CD8-positive, alpha-beta T cell (primary cell): ENCODE measurements at regions of chr1 and their contacts with region 1.

Region 1: DNA sequence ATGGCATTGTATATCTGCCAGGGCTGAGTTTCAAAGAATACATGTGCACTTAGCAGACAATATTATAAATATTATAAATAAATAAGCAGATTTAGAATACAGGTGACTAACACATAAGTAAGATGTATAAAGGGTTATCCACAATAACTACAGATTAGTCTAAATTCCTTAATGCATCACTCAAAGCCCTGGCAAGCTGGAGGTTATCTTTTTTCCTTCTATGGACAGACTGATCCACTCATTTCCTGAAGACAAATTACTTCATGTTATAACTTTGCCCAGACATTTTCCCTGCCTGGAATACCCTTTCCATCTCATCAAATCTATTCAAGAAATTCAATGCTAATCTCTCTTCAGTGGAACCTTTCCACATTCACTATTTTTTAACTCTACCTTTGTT is 38.8 kb downstream of the LUZP1 start:
- DNase-seq: no peak
- ATAC-seq: no peak
- H3K4me3 ChIP-seq: no peak overlapping the region
- H3K4me3 Mint-ChIP-seq: no peak overlapping the region
- H3K27ac ChIP-seq: no peak overlapping the region
- H3K27ac Mint-ChIP-seq: no peak overlapping the region
- H3K4me1 ChIP-seq: no peaks in the 10 kb centered on the region
- H3K4me1 Mint-ChIP-seq: peaks cover 21% of the 10 kb centered on the region
- H3K27me3 ChIP-seq: no peaks in the 10 kb centered on the region
- H3K27me3 Mint-ChIP-seq: no peaks in the 10 kb centered on the region
- CTCF ChIP-seq: no peak

Region 2: DNA sequence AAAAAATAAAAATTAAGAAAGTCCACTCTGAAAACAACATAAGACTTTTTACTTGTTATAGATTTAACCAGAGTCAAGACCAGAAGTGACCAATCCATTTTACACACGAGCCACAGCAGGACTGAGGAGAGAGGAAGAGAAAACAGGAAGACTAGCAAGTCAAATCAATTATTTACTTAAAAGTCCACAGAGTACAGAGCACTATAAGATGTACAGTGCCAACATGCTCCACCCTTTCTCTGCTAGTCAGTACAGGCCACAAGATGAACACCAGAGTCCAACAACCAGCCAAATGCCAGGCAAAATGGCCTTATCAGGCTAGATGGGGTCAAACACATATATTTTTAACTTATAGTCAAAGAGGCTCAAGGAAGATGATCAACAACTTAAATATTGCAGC is 19.3 kb after region 1 on chr1:
- CTCF ChIA-PET with region 1: no interaction called
- POLR2A ChIA-PET with region 1: no interaction called
- intact Hi-C with region 1: loop called in 1 of 2 experiments (anchors 1 kb)
- DNase-seq: no peak
- ATAC-seq: no peak
- H3K4me3 ChIP-seq: no peak overlapping the region
- H3K4me3 Mint-ChIP-seq: no peak overlapping the region
- H3K27ac ChIP-seq: no peak overlapping the region
- H3K27ac Mint-ChIP-seq: no peak overlapping the region
- H3K4me1 ChIP-seq: peaks cover 14% of the 10 kb centered on the region
- H3K4me1 Mint-ChIP-seq: peaks cover 42% of the 10 kb centered on the region
- H3K27me3 ChIP-seq: no peaks in the 10 kb centered on the region
- H3K27me3 Mint-ChIP-seq: no peaks in the 10 kb centered on the region
- CTCF ChIP-seq: no peak

Region 3: DNA sequence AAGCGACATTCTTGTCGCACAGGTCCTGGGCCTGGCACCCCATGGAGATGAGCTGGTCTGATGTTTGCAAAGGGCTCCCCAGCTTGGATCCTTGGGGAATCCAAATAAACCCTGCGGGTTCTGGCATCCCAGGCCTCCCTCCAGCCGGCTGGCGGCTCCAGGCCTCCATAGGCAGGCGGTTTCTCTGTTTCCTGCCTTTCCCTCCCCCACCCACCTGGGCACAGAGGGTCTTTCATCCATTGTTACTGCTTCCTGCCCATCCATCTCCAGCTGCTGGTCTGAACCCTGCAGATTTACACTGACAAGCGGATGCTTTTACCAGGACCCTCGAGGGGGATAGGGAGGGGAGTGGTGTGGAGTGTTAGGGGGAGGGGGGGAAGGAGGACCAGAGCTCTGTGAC is 468.6 kb after region 1 on chr1:
- CTCF ChIA-PET with region 1: no interaction called
- POLR2A ChIA-PET with region 1: no interaction called
- intact Hi-C with region 1: no loop called
- DNase-seq: no peak
- ATAC-seq: no peak
- H3K4me3 ChIP-seq: peak overlapping the region in 1 of 2 experiments; percentile 1
- H3K4me3 Mint-ChIP-seq: no peak overlapping the region
- H3K27ac ChIP-seq: peak overlapping the region in 1 of 2 experiments; percentile 53
- H3K27ac Mint-ChIP-seq: no peak overlapping the region
- H3K4me1 ChIP-seq: peaks cover 94% of the 10 kb centered on the region
- H3K4me1 Mint-ChIP-seq: peaks cover 93% of the 10 kb centered on the region
- H3K27me3 ChIP-seq: no peaks in the 10 kb centered on the region
- H3K27me3 Mint-ChIP-seq: no peaks in the 10 kb centered on the region
- CTCF ChIP-seq: no peak

Region 4: DNA sequence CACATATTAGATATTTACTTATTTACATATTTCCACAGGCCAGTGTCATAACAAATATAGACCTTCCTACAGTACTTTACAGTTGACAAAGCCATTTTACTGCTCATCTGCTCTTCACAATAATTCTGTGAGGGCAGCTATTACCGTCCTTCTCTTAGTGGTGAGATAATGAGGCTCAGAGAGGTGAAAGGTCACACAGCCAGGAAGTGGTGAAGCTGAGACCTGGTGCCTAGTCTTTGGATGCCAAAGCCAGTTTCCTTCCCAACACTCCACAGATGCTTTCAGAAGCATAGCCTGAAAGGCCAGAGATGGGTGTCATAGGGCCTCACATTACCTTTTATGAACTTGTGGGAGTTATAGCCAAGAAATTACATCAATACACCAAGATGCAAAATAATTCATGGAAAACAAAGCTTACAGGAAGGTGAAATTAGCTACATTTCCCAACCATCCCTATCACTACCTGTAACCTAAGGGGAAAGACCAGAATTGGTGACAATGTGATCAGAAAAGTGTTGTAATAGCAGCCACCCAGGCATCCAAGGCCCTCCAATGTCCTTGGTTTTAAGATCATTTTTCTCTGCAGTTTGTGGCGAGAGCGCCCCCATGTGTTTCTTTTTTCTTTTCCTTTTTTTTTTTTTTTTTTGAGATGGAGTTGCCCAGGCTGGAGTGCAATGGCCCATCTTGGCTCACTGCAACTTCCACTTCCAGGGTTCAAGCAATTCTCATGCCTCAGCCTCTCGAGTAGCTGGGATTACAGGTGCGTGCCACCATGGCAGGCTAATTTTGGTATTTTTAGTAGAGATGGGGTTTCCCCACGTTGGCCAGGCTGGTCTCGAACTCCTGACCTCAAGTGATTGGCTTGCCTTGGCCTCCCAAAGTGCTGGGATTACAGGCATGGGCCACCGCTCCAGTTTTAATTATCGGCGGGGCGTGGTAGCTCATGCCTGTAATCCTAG is 535.3 kb after region 1 on chr1:
- CTCF ChIA-PET with region 1: no interaction called
- POLR2A ChIA-PET with region 1: no interaction called
- intact Hi-C with region 1: no loop called
- DNase-seq: peak in 2 of 9 experiments; percentile 32 to 39
- ATAC-seq: no peak
- H3K4me3 ChIP-seq: no peak overlapping the region
- H3K4me3 Mint-ChIP-seq: no peak overlapping the region
- H3K27ac ChIP-seq: no peak overlapping the region
- H3K27ac Mint-ChIP-seq: no peak overlapping the region
- H3K4me1 ChIP-seq: no peaks in the 10 kb centered on the region
- H3K4me1 Mint-ChIP-seq: peaks cover 6% of the 10 kb centered on the region
- H3K27me3 ChIP-seq: no peaks in the 10 kb centered on the region
- H3K27me3 Mint-ChIP-seq: no peaks in the 10 kb centered on the region
- CTCF ChIP-seq: peak; percentile 29